Mammary epithelial cell (primary cell): ENCODE measurements at regions of chr20 and their contacts with region 1.

Region 1: DNA sequence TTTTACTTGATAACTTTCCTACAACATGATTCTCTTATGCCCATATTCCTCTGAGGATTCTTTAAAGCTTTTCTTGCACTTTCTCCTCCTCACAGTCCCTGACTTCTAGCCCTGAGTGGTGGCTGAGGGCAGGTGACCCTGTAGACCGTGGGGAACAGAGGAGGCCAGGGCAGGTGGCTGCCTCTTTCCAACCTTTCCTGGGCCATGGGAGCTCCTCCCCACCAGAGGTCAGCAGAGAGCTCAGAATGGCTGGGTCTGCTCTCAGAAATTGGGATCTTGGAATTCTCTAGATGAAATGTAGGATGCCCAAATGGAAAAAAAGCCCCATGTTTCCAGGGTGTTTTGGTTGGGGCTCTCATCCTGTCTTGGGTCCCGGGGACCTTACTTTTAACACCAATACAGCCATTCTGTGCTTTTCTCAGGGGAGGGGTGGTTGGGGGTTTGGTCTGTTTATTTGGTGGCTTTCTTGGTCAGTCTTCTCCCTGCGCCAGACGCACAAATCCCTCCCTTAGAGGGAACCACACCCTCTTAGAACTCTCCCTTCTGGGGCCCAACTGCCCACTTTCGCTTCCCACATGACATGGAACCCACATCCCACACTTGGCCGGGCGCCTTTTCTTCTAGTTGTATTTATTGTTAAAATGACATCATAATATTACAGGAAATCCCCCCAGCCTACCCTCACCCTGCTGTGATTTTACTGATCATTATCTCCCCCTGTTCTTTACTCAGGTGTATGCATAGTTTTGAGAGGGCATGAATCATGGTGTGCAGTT is 17.9 kb downstream of the GNAS start:
- DNase-seq: peak; percentile 35
- H3K4me3 ChIP-seq: no peak overlapping the region
- H3K27ac ChIP-seq: no peak overlapping the region
- H3K4me1 ChIP-seq: no peaks in the 10 kb centered on the region
- H3K27me3 ChIP-seq: peaks cover 5% of the 10 kb centered on the region
- CTCF ChIP-seq: peak; percentile 87 to 96

Region 2: GRCh38 chr20:58634521-58635278 is 235.7 kb before region 1 on chr20:
- CTCF ChIA-PET with region 1: no interaction called
- dilution Hi-C with region 1: no loop called
- in situ Hi-C with region 1: no loop called
- intact Hi-C with region 1: no loop called
- DNase-seq: no peak
- H3K4me3 ChIP-seq: no peak overlapping the region
- H3K27ac ChIP-seq: no peak overlapping the region
- H3K4me1 ChIP-seq: peaks cover 17% of the 10 kb centered on the region
- H3K27me3 ChIP-seq: no peaks in the 10 kb centered on the region
- CTCF ChIP-seq: no peak

Region 3: GRCh38 chr20:59082077-59082740 is 211.8 kb after region 1 on chr20:
- CTCF ChIA-PET with region 1: no interaction called
- dilution Hi-C with region 1: no loop called
- in situ Hi-C with region 1: no loop called
- intact Hi-C with region 1: loop called (anchors 2 kb)
- DNase-seq: peak; percentile 35
- H3K4me3 ChIP-seq: no peak overlapping the region
- H3K27ac ChIP-seq: no peak overlapping the region
- H3K4me1 ChIP-seq: peaks cover 10% of the 10 kb centered on the region
- H3K27me3 ChIP-seq: peaks cover 7% of the 10 kb centered on the region
- CTCF ChIP-seq: peak; percentile 20 to 25

Region 4: GRCh38 chr20:59207742-59208357 is 337.4 kb after region 1 on chr20:
- CTCF ChIA-PET with region 1: no interaction called
- dilution Hi-C with region 1: loop called (anchors 25 kb)
- in situ Hi-C with region 1: loop called in 1 of 2 experiments (anchors 10 kb)
- intact Hi-C with region 1: loop called (anchors 1 kb)
- DNase-seq: peak; percentile 23
- H3K4me3 ChIP-seq: no peak overlapping the region
- H3K27ac ChIP-seq: no peak overlapping the region
- H3K4me1 ChIP-seq: no peaks in the 10 kb centered on the region
- H3K27me3 ChIP-seq: no peaks in the 10 kb centered on the region
- CTCF ChIP-seq: peak; percentile 43 to 76

Region 5: GRCh38 chr20:59455402-59456341 is 585.2 kb after region 1 on chr20:
- CTCF ChIA-PET with region 1: no interaction called
- dilution Hi-C with region 1: no loop called
- in situ Hi-C with region 1: loop called (anchors 25 kb)
- intact Hi-C with region 1: loop called (anchors 2 kb)
- DNase-seq: peak; percentile 5
- H3K4me3 ChIP-seq: no peak overlapping the region
- H3K27ac ChIP-seq: no peak overlapping the region
- H3K4me1 ChIP-seq: no peaks in the 10 kb centered on the region
- H3K27me3 ChIP-seq: no peaks in the 10 kb centered on the region
- CTCF ChIP-seq: peak; percentile 48 to 63